ENCODE measurements at regions of chr20 and their contacts with region 1.

Region 1: GRCh38 chr20:62500237-62500864 is 24.6 kb upstream of the GATA5 start:
- DNase-seq: peak; percentile 92
- H3K4me3 ChIP-seq: no peak overlapping the region
- H3K27ac ChIP-seq: no peak overlapping the region
- H3K4me1 ChIP-seq: peaks cover 0 to 11% of the 10 kb centered on the region in 2 experiments; a peak in 1 of 4 replicates
- H3K27me3 ChIP-seq: no peaks in the 10 kb centered on the region
- CTCF ChIP-seq: peak; percentile 73
- EP300 ChIP-seq: no peak
- RAD21 ChIP-seq: peak; percentile 83

Region 2: DNA sequence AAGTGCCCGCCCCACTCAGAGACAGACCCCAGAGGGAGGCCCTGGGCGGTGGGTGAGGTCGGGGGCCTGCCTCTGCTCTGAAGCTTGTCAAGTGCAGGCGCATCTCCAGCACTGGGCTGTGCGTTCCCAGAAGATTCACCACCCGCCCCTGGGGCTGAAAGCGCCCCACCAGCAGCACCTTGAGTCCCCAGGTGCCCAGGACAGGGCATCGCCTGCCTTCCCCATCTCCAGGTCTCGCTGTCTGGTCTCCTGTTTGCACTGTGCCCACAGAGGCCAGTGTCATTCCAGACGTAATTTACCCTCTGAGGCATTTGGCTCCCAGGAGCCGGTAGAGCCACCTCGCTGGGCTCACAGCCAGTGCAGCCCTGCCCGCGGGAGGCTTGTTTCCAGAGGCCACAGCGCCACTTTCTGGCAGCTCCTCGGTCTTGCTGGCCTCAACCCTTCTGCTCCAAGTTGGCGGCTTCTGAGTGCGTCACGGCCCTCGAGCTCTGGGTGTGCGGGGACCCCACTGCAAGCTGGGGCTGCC is 625.8 kb before region 1 on chr20:
- CTCF ChIA-PET with region 1: no interaction called
- POLR2A ChIA-PET with region 1: no interaction called
- DNase-seq: no peak
- H3K4me3 ChIP-seq: no peak overlapping the region
- H3K27ac ChIP-seq: no peak overlapping the region
- H3K4me1 ChIP-seq: no peaks in the 10 kb centered on the region
- H3K27me3 ChIP-seq: no peaks in the 10 kb centered on the region
- CTCF ChIP-seq: no peak
- EP300 ChIP-seq: no peak
- RAD21 ChIP-seq: 0 out of 2 replicates have a peak, but pooled peaks have one; percentile 20

Region 3: DNA sequence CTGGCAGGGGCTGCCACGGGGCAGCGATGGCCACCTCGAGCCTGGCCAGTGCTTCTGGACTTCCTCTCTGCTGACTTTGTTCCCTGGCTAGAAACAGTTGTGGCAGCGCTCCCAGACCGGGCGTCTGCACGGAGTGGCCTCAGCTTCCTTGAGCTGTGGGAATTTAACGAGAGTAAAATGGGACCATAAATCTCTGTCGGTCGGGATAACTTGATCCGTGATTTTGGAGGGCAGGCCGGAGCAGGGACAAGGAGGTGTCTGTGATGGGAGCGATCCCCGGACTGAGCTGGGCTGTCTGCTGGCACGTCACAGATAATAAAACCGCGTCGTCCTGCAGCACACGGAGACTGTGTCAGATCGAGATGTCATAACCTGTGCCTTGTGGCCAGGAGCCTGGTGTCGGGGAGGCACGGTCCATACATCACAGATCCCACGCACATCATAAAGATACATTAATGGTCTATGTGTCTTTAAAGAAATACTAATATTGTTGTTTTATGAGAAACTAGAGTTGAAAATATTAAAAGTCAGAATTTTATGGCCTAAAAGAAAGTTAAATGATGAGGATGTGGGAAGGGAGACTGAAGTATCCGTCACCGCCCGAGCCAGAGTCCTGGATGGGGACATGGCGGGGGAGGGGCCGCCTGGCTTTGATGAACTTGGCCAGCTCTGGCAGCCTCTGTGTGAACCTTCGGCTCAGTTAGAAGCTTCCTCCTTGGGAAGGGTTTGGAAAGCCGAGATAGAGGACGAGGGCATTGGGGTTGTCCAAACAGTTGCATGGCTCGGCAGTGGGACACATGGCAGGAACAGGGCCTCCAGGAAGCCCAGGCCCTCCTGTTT is 66.5 kb before region 1 on chr20:
- CTCF ChIA-PET with region 1: no interaction called
- POLR2A ChIA-PET with region 1: no interaction called
- DNase-seq: no peak
- H3K4me3 ChIP-seq: no peak overlapping the region
- H3K27ac ChIP-seq: no peak overlapping the region
- H3K4me1 ChIP-seq: no peaks in the 10 kb centered on the region; a peak in 1 of 4 replicates
- H3K27me3 ChIP-seq: peaks cover 17% of the 10 kb centered on the region
- CTCF ChIP-seq: no peak
- EP300 ChIP-seq: no peak
- RAD21 ChIP-seq: no peak

Region 4: GRCh38 chr20:62477669-62478455 is 22.5 kb before region 1 on chr20:
- CTCF ChIA-PET with region 1: interaction called, 42 read pairs
- POLR2A ChIA-PET with region 1: no interaction called
- DNase-seq: peak; percentile 65
- H3K4me3 ChIP-seq: no peak overlapping the region
- H3K27ac ChIP-seq: no peak overlapping the region
- H3K4me1 ChIP-seq: no peaks in the 10 kb centered on the region; a peak in 1 of 4 replicates
- H3K27me3 ChIP-seq: peaks cover 55% of the 10 kb centered on the region
- CTCF ChIP-seq: no peak
- EP300 ChIP-seq: no peak
- RAD21 ChIP-seq: no peak

Region 5: DNA sequence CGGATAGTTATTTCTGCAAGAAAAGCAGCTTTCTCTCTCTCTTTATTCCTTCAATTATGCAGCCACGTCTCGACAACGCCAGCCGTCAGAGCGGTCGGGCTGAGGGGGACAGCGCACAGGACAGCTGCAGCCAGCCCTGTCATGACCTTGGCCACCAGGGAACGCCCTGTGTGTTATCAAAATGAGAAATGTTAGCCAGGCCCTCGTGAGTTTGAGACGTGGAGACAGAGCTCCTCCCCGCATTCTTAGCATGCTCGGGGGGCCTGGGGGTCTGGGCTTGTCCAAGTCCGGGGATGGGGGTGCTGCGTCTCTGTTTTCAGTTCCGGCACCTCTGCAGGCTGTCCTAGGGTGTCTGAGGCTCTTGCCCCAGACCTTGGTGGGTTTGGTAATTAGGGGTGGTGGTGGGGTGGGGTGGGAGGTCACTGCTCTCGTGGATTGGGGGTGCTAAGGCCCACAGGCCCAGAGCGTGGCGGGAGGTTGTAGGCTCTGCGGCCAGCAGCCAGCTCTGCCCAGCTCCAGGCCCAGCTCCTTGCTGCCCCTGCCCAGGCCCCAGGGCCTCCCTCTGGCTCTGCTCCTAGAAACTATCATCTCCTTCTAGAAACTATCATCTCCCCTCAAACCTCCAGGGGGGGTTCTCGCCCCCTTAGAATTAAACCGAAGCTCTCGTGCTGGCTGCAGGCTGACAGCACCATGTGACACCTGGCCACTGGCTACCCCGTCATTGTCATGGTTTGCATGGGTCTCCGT is 29.7 kb after region 1 on chr20:
- CTCF ChIA-PET with region 1: interaction called, 11 read pairs
- POLR2A ChIA-PET with region 1: no interaction called
- DNase-seq: no peak
- H3K4me3 ChIP-seq: no peak overlapping the region
- H3K27ac ChIP-seq: no peak overlapping the region
- H3K4me1 ChIP-seq: no peaks in the 10 kb centered on the region; a peak in 1 of 4 replicates
- H3K27me3 ChIP-seq: no peaks in the 10 kb centered on the region
- CTCF ChIP-seq: no peak
- EP300 ChIP-seq: no peak
- RAD21 ChIP-seq: no peak

Region 6: GRCh38 chr20:62550087-62550632 is 49.8 kb after region 1 on chr20:
- CTCF ChIA-PET with region 1: interaction called, 12 read pairs
- POLR2A ChIA-PET with region 1: no interaction called
- DNase-seq: no peak
- H3K4me3 ChIP-seq: no peak overlapping the region
- H3K27ac ChIP-seq: no peak overlapping the region
- H3K4me1 ChIP-seq: peaks cover 0 to 25% of the 10 kb centered on the region in 2 experiments; a peak in 1 of 4 replicates
- H3K27me3 ChIP-seq: peaks cover 27% of the 10 kb centered on the region
- CTCF ChIP-seq: no peak
- EP300 ChIP-seq: no peak
- RAD21 ChIP-seq: no peak

Region 7: GRCh38 chr20:62606551-62607201 is 106.3 kb after region 1 on chr20:
- CTCF ChIA-PET with region 1: interaction called, 20 read pairs
- POLR2A ChIA-PET with region 1: no interaction called
- DNase-seq: no peak
- H3K4me3 ChIP-seq: no peak overlapping the region
- H3K27ac ChIP-seq: no peak overlapping the region; a peak in 1 of 4 replicates
- H3K4me1 ChIP-seq: peaks cover 8 to 17% of the 10 kb centered on the region in 2 experiments; a peak in 3 of 4 replicates
- H3K27me3 ChIP-seq: no peaks in the 10 kb centered on the region
- CTCF ChIP-seq: no peak
- EP300 ChIP-seq: 0 out of 4 replicates have a peak, but pooled peaks of 1 of the 2 experiments have one; percentile 14
- RAD21 ChIP-seq: no peak

Region 8: DNA sequence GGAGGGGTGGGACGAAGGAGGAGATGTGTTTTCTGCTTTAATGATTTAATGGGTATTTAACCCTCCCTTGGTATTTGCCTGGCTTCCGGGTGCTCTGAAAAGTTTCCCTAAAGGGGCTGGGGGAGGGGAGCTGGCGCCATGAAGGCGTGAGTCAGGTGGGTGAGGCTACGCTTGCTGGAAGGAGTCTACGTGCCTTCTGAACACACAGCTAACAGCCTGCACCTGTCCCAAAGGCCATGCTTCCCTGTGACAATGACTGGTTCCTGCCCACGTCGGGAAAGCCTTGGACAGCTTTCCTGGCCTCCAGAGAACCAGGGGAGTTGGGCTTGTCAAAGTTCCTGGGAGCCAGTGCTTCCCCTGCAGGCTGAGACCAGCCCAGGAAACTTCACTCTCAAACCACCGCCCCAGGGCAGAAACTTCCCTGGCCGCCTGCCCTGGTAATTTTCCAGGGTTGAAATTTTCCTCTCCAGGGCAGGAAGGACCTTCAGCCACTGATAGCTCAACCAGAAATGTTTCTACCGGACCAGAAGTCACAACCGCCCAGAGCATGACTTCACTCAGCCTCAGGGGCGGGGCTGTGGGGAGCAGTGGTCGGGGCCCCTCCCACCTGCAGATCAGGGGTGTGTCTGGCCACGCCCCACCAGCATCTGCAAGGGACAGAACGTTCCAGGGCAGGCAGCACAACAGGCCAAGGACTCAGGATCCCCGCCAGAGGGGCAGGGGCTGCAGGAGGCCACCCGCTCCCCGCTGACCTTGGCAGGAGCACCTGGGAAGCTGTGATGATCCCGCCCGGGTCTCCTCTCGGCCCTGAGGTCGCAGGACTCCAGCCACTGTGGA is 123.4 kb after region 1 on chr20:
- CTCF ChIA-PET with region 1: interaction called, 101 read pairs
- POLR2A ChIA-PET with region 1: no interaction called
- DNase-seq: peak; percentile 93
- H3K4me3 ChIP-seq: no peak overlapping the region
- H3K27ac ChIP-seq: peak overlapping the region in 1 of 2 experiments; percentile 61; a peak in 2 of 4 replicates
- H3K4me1 ChIP-seq: peaks cover 9 to 33% of the 10 kb centered on the region in 2 experiments; a peak in 3 of 4 replicates
- H3K27me3 ChIP-seq: no peaks in the 10 kb centered on the region
- CTCF ChIP-seq: no peak
- EP300 ChIP-seq: no peak
- RAD21 ChIP-seq: no peak

Measured in SK-N-SH (cell line).